ENCODE measurements at regions of chr1 and their contacts with region 1.

Region 1: DNA sequence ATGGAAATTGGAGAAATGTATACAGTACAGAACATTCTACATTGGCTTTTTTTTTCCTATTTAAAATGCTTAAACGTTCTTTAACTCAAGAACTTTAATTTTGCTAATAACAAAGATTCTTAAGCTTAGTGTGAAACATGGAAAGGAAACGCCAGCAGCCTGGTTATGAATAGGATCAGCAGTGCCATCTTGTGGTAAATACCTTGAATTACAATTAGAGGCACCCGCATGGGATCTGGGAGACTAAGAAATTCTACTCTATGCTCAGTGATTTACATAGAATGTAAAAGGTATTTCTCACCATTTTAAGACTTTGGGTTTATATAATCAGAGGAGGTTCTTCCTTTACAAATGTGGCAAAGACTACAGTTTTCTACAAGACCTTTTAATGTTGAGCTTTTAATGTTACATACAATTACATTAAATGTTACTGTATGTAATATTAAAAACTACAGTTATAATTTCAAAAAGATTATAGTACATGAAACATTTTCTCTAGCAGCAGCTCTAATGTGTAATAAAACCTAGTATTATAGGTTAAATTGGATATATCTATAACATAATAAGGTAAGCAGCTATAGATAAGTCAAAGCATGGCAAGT is 32.1 kb upstream of the APOBEC4 start:
- DNase-seq: peak; percentile 23
- H3K4me3 Mint-ChIP-seq: no peak overlapping the region
- H3K27ac Mint-ChIP-seq: no peak overlapping the region
- H3K4me1 Mint-ChIP-seq: peaks cover 2% of the 10 kb centered on the region
- H3K27me3 Mint-ChIP-seq: peaks cover 3% of the 10 kb centered on the region

Region 2: GRCh38 chr1:183635606-183636333 is 49.4 kb before region 1 on chr1 and contains the start of gene ARPC5:
- CTCF ChIA-PET with region 1: interaction called, 8 read pairs
- POLR2A ChIA-PET with region 1: no interaction called
- intact Hi-C with region 1: loop called (anchors 1 kb)
- DNase-seq: peak; percentile 98
- H3K4me3 Mint-ChIP-seq: peak within 1 kb of the TSS; percentile 95
- H3K27ac Mint-ChIP-seq: peak within 1 kb of the TSS; percentile 99
- H3K4me1 Mint-ChIP-seq: peaks cover 33% of the 10 kb centered on the region
- H3K27me3 Mint-ChIP-seq: no peaks in the 10 kb centered on the region
- total RNA-seq, gene ARPC5: 158 to 161 TPM

Region 3: DNA sequence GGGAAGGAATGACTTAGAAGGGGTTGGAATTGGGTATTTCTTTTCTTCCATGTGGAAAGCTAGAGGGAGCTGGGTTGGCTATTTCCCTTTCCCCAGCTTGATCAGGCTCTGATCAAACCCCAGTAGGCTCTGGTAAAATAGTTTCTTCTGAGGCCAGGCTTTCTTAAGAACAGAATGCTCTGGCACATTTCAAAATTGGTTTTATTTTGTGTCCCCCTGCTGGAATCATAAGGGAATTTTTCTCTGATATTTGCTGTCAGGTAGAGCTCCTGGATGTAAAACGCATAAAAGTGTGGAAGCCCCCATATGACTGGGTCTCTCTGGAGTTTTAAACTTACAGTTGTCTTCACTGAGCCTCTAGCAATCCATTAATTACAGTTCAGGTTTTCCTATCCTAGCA is 15.0 kb before region 1 on chr1:
- CTCF ChIA-PET with region 1: interaction called, 26 read pairs
- POLR2A ChIA-PET with region 1: no interaction called
- intact Hi-C with region 1: no loop called
- DNase-seq: no peak
- H3K4me3 Mint-ChIP-seq: no peak overlapping the region
- H3K27ac Mint-ChIP-seq: no peak overlapping the region
- H3K4me1 Mint-ChIP-seq: no peaks in the 10 kb centered on the region
- H3K27me3 Mint-ChIP-seq: peaks cover 2% of the 10 kb centered on the region

Region 4: DNA sequence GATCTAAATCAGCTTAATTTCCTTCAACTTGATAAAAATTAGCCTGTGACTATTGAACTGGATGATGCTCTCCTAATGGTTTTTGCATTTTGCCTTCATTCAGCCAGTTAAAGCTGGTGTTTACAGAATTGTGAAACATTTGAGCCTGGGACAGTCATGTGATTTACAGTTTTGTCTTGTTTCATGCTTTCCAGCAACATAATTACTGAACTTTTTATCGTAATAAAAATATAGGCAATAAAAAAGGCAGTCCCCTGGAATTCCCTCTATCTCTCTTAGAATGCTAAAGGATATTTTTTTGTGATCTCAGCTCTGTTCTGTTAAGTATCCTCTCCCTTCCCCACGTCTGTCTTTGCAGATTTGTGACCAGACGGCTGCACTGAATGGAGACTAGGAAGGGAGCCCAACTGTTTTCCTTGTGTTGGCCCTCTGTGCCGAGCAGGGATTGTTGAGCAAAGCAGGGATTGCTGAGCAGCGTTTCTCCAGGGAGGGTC is 49.4 kb after region 1 on chr1:
- CTCF ChIA-PET with region 1: no interaction called
- POLR2A ChIA-PET with region 1: no interaction called
- intact Hi-C with region 1: no loop called
- DNase-seq: no peak
- H3K4me3 Mint-ChIP-seq: no peak overlapping the region
- H3K27ac Mint-ChIP-seq: no peak overlapping the region
- H3K4me1 Mint-ChIP-seq: no peaks in the 10 kb centered on the region
- H3K27me3 Mint-ChIP-seq: no peaks in the 10 kb centered on the region

Region 5: DNA sequence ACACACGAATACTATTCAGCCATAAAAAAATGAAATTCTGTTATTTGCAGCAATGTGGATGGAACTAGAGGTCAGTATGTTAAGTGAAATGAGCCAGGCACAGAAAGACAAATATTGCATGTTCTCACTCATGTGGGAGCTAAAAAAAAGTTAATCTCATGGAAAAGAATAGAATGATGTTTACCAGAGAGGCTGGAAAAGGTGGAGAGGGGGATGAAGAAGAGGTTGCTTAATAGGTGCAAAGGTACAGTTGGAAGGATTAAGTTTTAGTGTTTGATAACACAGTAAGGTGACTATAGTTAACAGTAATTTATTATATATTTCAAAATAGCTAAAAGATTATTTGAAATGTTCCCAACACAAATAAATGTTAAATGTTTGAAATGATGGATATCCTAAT is 108.9 kb after region 1 on chr1:
- CTCF ChIA-PET with region 1: no interaction called
- POLR2A ChIA-PET with region 1: no interaction called
- intact Hi-C with region 1: no loop called
- DNase-seq: no peak
- H3K4me3 Mint-ChIP-seq: no peak overlapping the region
- H3K27ac Mint-ChIP-seq: no peak overlapping the region
- H3K4me1 Mint-ChIP-seq: no peaks in the 10 kb centered on the region
- H3K27me3 Mint-ChIP-seq: no peaks in the 10 kb centered on the region

Region 6: GRCh38 chr1:184340984-184341383 is 655.8 kb after region 1 on chr1:
- CTCF ChIA-PET with region 1: no interaction called
- POLR2A ChIA-PET with region 1: no interaction called
- intact Hi-C with region 1: no loop called
- DNase-seq: no peak
- H3K4me3 Mint-ChIP-seq: no peak overlapping the region
- H3K27ac Mint-ChIP-seq: no peak overlapping the region
- H3K4me1 Mint-ChIP-seq: no peaks in the 10 kb centered on the region
- H3K27me3 Mint-ChIP-seq: peaks cover 6% of the 10 kb centered on the region

Measured in activated CD4-positive, alpha-beta memory T cell treated with anti-CD3 and anti-CD28 coated beads for 36 hours (primary cell).